SK-N-SH (cell line): ENCODE measurements at regions of chr15 and their contacts with region 1.

Region 1: GRCh38 chr15:80455668-80456442 is 51.7 kb downstream of the ARNT2 start:
- DNase-seq: peak; percentile 75
- H3K4me3 ChIP-seq: peak overlapping the region in 1 of 2 experiments; percentile 20; a peak in 1 of 4 replicates
- H3K27ac ChIP-seq: peak overlapping the region; percentile 49 to 69; a peak in 3 of 4 replicates
- H3K4me1 ChIP-seq: peaks cover 13 to 16% of the 10 kb centered on the region in 2 experiments; a peak in 3 of 4 replicates
- H3K27me3 ChIP-seq: no peaks in the 10 kb centered on the region
- CTCF ChIP-seq: peak; percentile 98
- EP300 ChIP-seq: peak; percentile 66 to 94
- RAD21 ChIP-seq: peak; percentile 96

Region 2: GRCh38 chr15:80429964-80430363 is 25.9 kb before region 1 on chr15:
- CTCF ChIA-PET with region 1: interaction called, 14 read pairs
- POLR2A ChIA-PET with region 1: no interaction called
- DNase-seq: no peak
- H3K4me3 ChIP-seq: no peak overlapping the region
- H3K27ac ChIP-seq: no peak overlapping the region
- H3K4me1 ChIP-seq: no peaks in the 10 kb centered on the region; a peak in 1 of 4 replicates
- H3K27me3 ChIP-seq: no peaks in the 10 kb centered on the region
- CTCF ChIP-seq: no peak
- EP300 ChIP-seq: no peak
- RAD21 ChIP-seq: no peak

Region 3: DNA sequence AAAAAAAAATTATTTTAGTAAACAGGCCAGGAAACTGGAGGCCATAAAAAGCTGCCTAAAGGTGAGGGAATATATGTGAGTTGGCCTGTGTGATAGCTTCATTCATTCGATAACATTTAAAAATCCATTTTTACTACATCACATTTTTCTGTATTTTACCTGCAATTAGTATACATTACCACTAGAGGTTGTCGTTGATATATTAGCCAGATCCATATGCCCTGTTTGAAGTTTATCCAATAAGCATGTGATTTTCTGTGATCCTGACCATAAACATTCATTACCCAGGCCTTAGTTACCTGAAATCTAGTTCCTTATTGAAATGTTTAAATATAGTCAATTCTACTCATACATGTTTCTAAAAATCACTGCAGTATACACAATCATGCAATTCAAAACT is 19.7 kb after region 1 on chr15:
- CTCF ChIA-PET with region 1: interaction called, 22 read pairs
- POLR2A ChIA-PET with region 1: no interaction called
- DNase-seq: no peak
- H3K4me3 ChIP-seq: no peak overlapping the region; a peak in 1 of 4 replicates
- H3K27ac ChIP-seq: no peak overlapping the region
- H3K4me1 ChIP-seq: peaks cover 0 to 12% of the 10 kb centered on the region in 2 experiments; a peak in 2 of 4 replicates
- H3K27me3 ChIP-seq: no peaks in the 10 kb centered on the region
- CTCF ChIP-seq: peak; percentile 43
- EP300 ChIP-seq: no peak
- RAD21 ChIP-seq: no peak

Region 4: GRCh38 chr15:80512726-80513660 is 57.1 kb after region 1 on chr15:
- CTCF ChIA-PET with region 1: interaction called, 16 read pairs
- POLR2A ChIA-PET with region 1: no interaction called
- DNase-seq: peak; percentile 18
- H3K4me3 ChIP-seq: no peak overlapping the region
- H3K27ac ChIP-seq: 0 out of 4 replicates have a peak overlapping the region, but pooled peaks of 1 of the 2 experiments have one; percentile 16
- H3K4me1 ChIP-seq: peaks cover 0 to 6% of the 10 kb centered on the region in 2 experiments; a peak in 1 of 4 replicates
- H3K27me3 ChIP-seq: no peaks in the 10 kb centered on the region
- CTCF ChIP-seq: peak; percentile 41
- EP300 ChIP-seq: no peak
- RAD21 ChIP-seq: peak; percentile 59

Region 5: DNA sequence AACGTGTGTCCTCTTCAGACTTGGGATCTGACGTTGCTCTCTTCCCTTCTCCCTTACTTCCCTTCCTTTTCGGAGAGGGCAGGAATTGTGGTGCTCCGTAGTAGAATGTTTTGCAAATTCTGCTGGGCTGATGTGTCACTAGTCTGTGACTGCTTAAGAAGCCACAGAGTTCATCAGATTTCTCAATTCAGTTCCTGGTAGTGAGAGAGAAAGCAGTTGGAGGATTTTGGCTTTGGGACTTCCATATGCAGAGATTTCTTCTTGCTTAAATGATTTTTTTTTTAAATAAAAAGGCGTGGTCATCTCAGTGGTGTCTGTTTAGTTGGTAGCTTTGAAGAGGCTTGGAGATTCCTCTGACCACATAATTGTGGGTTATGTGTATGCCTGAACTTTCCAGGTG is 333.4 kb after region 1 on chr15:
- CTCF ChIA-PET with region 1: interaction called, 11 read pairs
- POLR2A ChIA-PET with region 1: no interaction called
- DNase-seq: no peak
- H3K4me3 ChIP-seq: no peak overlapping the region
- H3K27ac ChIP-seq: no peak overlapping the region
- H3K4me1 ChIP-seq: no peaks in the 10 kb centered on the region; a peak in 1 of 4 replicates
- H3K27me3 ChIP-seq: no peaks in the 10 kb centered on the region
- CTCF ChIP-seq: no peak
- EP300 ChIP-seq: no peak
- RAD21 ChIP-seq: no peak